ENCODE measurements at regions of chr12 and their contacts with region 1.

Region 1: DNA sequence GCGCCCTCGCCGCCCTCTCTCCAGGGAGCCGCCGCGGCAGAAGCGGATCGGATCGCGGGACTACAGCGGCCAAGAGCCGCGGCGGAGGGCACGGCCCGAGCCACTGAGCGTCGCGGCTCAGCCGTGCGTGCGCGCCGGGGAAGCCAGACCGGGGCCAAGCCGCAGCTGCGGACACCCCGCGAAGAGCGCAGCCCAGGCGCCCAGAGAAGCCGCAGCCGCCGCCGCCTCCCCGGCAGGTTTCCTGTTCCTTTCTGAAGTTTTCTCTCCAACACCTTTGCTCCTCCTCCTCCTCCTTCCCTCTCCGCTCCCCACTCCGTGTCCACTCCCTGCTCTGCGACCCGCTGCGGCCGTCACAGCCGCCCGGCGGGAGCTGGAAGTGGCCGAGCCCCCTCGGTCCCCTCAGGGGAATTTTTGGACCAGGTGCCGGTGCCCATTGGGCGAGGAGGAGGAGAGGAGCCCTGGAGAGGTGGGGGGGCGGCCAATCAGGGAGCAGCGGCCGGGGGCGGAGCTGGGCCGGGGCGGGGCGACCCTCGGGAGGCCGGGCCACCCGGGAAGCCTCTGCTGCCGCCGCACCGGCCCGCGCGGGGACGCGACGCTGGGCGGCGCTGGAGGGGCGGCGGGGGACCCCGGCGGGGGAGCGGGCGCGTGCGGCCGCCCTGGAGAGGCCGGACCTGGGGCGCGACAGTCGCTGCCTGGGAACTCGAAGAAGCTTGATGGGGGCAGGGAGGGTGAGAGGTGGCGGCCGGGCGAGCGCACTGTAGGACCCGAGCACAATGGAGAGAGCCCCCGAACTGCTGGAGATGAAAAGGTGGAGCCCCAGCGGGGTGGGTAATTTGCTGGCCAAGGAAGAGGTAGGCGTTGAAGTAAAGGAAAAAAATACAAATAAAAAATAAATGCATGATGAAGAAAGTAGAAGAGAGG is at the start of gene ITPR2:
- DNase-seq: peak; percentile 82 to 90 (median 87)
- H3K4me3 ChIP-seq: peak within 1 kb of the TSS; percentile 72 to 87 (median 85)
- H3K4me3 Mint-ChIP-seq: peak within 1 kb of the TSS; percentile 96 to 99
- H3K27ac ChIP-seq: peak within 1 kb of the TSS; percentile 88 to 98
- H3K27ac Mint-ChIP-seq: peak within 1 kb of the TSS; percentile 97 to 100 (median 100)
- H3K4me1 ChIP-seq: peaks cover 18 to 29% of the 10 kb centered on the region in 2 donors
- H3K4me1 Mint-ChIP-seq: peaks cover 40% of the 10 kb centered on the region
- H3K27me3 ChIP-seq: no peaks in the 10 kb centered on the region
- H3K27me3 Mint-ChIP-seq: no peaks in the 10 kb centered on the region
- CTCF ChIP-seq: peak; percentile 44
- polyA plus RNA-seq, gene ITPR2: 2.7 to 6.4 (median 5.7) TPM

Region 2: DNA sequence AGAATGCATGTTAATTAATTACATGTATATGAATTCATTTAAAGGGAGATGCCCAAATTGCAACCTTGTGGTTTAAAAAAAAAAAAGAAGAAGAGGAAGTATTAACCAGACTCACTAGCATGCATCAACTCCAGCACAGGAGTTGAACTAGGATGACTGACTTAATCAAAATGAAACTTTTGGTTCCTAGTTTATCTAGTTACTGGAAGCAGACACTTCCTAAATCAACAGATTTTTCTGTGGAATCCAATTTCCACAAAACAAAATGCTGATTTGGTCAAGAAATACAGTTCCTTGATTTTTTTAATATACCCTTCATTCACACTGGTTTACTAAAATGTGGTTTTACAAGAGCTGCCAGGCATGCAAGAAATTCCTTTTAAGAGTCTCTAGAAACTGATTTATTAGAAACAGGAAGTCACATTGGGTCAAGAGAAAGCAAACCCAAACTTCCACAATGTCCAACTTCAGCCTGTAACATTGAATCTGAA is 41.7 kb before region 1 on chr12:
- intact Hi-C with region 1: loop called in 1 of 2 experiments (anchors 2 kb)
- DNase-seq: peak; percentile 80 to 94 (median 93)
- H3K4me3 ChIP-seq: peak overlapping the region in 1 of 3 experiments; percentile 34
- H3K4me3 Mint-ChIP-seq: peak overlapping the region; percentile 46 to 58
- H3K27ac ChIP-seq: peak overlapping the region in 1 of 2 donors; percentile 77
- H3K27ac Mint-ChIP-seq: peak overlapping the region; percentile 90 to 95 (median 92)
- H3K4me1 ChIP-seq: peaks cover 21 to 31% of the 10 kb centered on the region in 2 donors
- H3K4me1 Mint-ChIP-seq: peaks cover 28% of the 10 kb centered on the region
- H3K27me3 ChIP-seq: no peaks in the 10 kb centered on the region
- H3K27me3 Mint-ChIP-seq: no peaks in the 10 kb centered on the region
- CTCF ChIP-seq: no peak

Region 3: GRCh38 chr12:26870491-26871419 is 37.7 kb after region 1 on chr12:
- intact Hi-C with region 1: no loop called
- DNase-seq: peak in 1 of 3 donors; percentile 4
- H3K4me3 ChIP-seq: no peak overlapping the region
- H3K4me3 Mint-ChIP-seq: peak overlapping the region; percentile 31 to 50
- H3K27ac ChIP-seq: no peak overlapping the region
- H3K27ac Mint-ChIP-seq: peak overlapping the region in 4 of 7 donors; percentile 31 to 64 (median 46)
- H3K4me1 ChIP-seq: peaks cover 54 to 56% of the 10 kb centered on the region in 2 donors
- H3K4me1 Mint-ChIP-seq: peaks cover 58% of the 10 kb centered on the region
- H3K27me3 ChIP-seq: no peaks in the 10 kb centered on the region
- H3K27me3 Mint-ChIP-seq: peaks cover 2 to 4% (median 3%) of the 10 kb centered on the region in 3 donors
- CTCF ChIP-seq: no peak